AG04450 (cell line): ENCODE measurements at regions of chr6 and their contacts with region 1.

Region 1: DNA sequence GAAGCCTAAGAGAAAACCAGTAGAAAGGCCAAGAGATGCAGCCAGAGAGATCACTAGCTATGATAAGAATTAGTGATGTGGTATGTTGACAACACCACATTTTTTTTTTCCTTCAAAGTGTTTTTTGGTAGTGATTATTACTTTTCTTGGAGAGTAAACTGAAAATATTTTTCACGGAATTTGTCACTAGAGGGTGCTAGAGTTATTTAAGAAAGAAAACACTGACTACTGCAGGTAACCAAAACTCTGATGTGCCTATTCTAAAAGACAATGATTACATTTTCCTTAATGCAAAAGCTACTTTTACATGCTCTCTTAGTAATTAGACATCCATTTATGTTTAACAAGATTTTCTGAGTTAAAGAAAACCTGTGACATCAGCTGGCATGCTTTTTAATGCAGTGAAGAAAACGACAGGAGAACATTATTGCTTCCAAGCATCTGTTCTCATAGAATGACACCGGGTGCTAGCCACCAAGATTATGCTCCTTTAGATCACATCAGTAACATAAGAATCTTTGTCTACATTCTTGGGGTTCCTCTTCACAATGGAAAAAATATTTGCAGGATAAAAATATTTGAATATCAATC is 28.8 kb downstream of the RWDD2A start:
- DNase-seq: no peak
- H3K4me3 ChIP-seq: no peak overlapping the region
- H3K27ac ChIP-seq: no peak overlapping the region
- H3K27me3 ChIP-seq: no peaks in the 10 kb centered on the region
- CTCF ChIP-seq: peak; percentile 57

Region 2: GRCh38 chr6:82893889-82894652 is 327.9 kb before region 1 on chr6:
- CTCF ChIA-PET with region 1: no interaction called
- POLR2A ChIA-PET with region 1: no interaction called
- DNase-seq: no peak
- H3K4me3 ChIP-seq: no peak overlapping the region
- H3K27ac ChIP-seq: no peak overlapping the region
- H3K27me3 ChIP-seq: no peaks in the 10 kb centered on the region
- CTCF ChIP-seq: no peak

Region 3: GRCh38 chr6:83371423-83371822 is 149.4 kb after region 1 on chr6:
- CTCF ChIA-PET with region 1: no interaction called
- POLR2A ChIA-PET with region 1: no interaction called
- DNase-seq: peak; percentile 36
- H3K4me3 ChIP-seq: no peak overlapping the region
- H3K27ac ChIP-seq: no peak overlapping the region
- H3K27me3 ChIP-seq: no peaks in the 10 kb centered on the region
- CTCF ChIP-seq: no peak

Region 4: DNA sequence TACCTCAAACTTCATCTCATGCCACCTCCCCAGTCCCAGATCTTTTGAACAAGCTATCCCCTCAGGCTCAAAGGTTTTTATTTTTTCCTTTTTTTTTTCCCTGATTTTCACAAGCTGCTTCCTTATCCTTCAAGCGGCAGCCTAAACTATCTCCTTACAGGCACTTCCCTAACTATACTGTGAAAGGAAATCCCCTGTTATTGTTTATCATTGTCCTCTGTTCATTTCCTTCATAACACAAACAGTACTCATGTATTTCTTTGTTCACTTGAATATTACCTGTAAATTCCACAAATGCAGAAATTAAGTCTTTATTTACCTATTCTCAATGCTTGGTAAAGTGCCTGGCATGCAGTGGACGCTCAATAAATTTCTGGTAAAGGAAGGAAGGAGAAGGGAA is 160.0 kb after region 1 on chr6:
- CTCF ChIA-PET with region 1: interaction called, 17 read pairs
- POLR2A ChIA-PET with region 1: no interaction called
- DNase-seq: no peak
- H3K4me3 ChIP-seq: no peak overlapping the region
- H3K27ac ChIP-seq: no peak overlapping the region
- H3K27me3 ChIP-seq: no peaks in the 10 kb centered on the region
- CTCF ChIP-seq: no peak

Region 5: GRCh38 chr6:83417880-83418663 is 196.1 kb after region 1 on chr6:
- CTCF ChIA-PET with region 1: interaction called, 36 read pairs
- POLR2A ChIA-PET with region 1: no interaction called
- DNase-seq: peak; percentile 39
- H3K4me3 ChIP-seq: no peak overlapping the region
- H3K27ac ChIP-seq: no peak overlapping the region
- H3K27me3 ChIP-seq: no peaks in the 10 kb centered on the region
- CTCF ChIP-seq: peak; percentile 77

Region 6: GRCh38 chr6:83536034-83536646 is 314.2 kb after region 1 on chr6:
- CTCF ChIA-PET with region 1: interaction called, 12 read pairs
- POLR2A ChIA-PET with region 1: no interaction called
- DNase-seq: no peak
- H3K4me3 ChIP-seq: no peak overlapping the region
- H3K27ac ChIP-seq: no peak overlapping the region
- H3K27me3 ChIP-seq: peaks cover 2% of the 10 kb centered on the region
- CTCF ChIP-seq: peak; percentile 86